Pancreas (tissue), 10 donors: ENCODE measurements at regions of chr12 and their contacts with region 1.

Region 1: DNA sequence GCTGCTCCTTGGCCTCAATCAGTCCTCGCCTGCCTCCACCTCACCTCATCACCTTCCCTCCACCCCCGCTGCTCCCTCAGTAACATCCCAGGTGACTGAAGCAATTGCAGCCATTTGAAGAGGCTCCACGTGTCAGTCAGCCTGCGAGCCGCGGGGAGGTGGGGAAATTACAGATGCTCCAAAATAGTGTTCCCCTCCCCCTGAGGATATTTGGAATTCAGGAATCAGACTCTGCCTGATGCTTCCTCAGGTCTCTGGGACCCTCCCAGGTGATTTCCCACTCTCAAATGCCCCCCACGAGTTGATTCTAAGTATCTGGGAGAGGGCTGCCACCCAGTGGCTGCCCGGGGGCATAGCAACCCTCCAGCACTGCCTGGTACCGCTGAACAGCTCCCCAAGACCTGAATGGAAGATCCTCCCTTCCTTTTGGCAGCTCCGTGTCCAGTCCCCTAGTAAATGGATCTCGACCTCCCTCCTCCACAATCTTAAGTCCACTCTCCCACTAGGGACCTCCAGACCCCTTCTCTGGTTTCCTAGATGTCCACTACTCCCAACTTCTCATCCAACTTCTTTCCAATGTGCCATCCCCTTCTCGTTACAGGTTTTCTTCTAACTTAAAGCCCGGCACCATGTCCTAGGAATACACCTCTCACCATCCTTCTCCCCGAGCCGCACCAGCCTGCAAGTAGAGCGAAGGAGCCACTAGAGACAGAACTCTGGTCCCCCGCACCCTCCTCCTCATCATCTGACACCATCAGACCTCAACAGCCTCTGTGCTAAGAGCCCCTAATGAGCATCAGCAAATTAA is 1.4 kb upstream of the ASIC1 start:
- DNase-seq: peak in 1 of 6 donors; percentile 46
- ATAC-seq: peak; percentile 51 to 83 (median 72)
- H3K4me3 ChIP-seq: no peak overlapping the region
- H3K27ac ChIP-seq: no peak overlapping the region
- H3K4me1 ChIP-seq: peaks cover 0 to 6% (median 0%) of the 10 kb centered on the region in 3 donors
- H3K27me3 ChIP-seq: no peaks in the 10 kb centered on the region
- CTCF ChIP-seq: peak; percentile 80 to 90 (median 88)

Region 2: GRCh38 chr12:49954863-49955830 is 100.9 kb before region 1 on chr12:
- intact Hi-C with region 1: no loop called
- DNase-seq: peak in 2 of 6 donors; percentile 47 to 57
- ATAC-seq: no peak
- H3K4me3 ChIP-seq: no peak overlapping the region
- H3K27ac ChIP-seq: no peak overlapping the region
- H3K4me1 ChIP-seq: no peaks in the 10 kb centered on the region
- H3K27me3 ChIP-seq: peaks cover 0 to 4% (median 0%) of the 10 kb centered on the region in 4 donors
- CTCF ChIP-seq: no peak

Region 3: DNA sequence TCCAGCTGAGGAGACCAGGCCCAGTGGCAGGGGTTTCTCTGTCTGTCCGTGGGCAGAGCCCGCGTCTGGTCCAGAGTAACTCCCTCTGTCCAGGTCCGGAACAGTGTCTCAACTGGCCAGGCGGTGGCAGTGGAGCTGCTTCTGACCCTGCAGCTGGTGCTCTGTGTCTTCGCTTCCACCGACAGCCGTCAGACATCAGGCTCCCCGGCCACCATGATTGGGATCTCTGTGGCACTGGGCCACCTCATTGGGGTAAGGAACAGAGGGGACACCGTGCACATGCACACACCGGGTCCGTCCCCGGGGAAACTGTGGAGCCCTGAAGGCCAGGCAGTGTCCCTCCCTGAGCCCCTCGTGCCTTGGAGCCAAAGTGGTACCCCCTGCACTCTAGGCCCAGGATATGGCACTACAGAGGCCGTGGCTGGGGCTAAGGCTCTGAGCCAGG is 81.8 kb before region 1 on chr12:
- intact Hi-C with region 1: loop called in 2 of 3 experiments (anchors 5 kb)
- DNase-seq: peak; percentile 40 to 87 (median 66)
- ATAC-seq: peak; percentile 73 to 95 (median 92)
- H3K4me3 ChIP-seq: no peak overlapping the region
- H3K27ac ChIP-seq: no peak overlapping the region
- H3K4me1 ChIP-seq: no peaks in the 10 kb centered on the region
- H3K27me3 ChIP-seq: no peaks in the 10 kb centered on the region
- CTCF ChIP-seq: peak; percentile 14 to 34 (median 26)